PC-3 (cell line): ENCODE measurements at regions of chr6 and their contacts with region 1.

Region 1: DNA sequence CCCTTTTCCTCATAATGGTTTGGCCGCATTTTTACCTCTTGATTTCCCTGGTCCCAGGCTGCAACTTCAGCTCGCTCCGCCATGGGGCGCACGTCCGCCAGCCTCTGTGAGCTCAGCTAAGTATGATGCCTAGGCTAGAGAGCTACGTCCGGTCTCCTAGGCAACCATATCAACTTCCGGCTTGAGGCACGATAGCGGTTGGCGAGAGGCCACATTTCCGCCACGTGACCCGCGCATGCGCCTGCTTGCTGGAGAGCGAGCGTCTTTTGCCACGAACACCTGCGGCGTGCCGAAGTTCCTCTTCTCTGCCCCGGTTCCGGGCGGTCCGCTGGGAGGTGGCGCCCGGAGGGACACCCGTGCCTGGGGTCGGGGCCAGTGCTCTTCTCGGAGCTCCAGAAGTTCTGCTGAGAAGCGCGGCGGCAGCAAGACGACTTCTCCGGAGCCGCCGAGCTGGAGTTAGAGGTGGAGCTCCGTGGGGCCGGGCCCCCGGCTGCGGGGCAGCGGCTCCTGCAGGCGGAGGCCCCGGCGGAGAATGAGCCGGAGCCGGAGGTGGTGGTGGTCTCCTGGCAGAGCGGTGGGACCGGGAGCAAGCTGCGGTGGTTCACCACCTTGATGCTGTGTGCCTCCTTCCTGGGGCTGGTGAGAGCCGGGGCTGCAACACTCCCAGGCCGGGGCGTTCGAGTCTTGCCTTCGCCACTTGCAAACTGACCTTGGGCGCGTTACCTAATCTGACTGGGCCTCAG is 172.0 kb downstream of the SLC16A10 start:
- DNase-seq: peak; percentile 97
- ATAC-seq: peak; percentile 91
- H3K4me3 ChIP-seq: peak overlapping the region; percentile 81
- H3K27ac ChIP-seq: peak overlapping the region; percentile 29; the same call in 1 of the 2 replicates
- H3K4me1 ChIP-seq: peaks cover 10% of the 10 kb centered on the region
- H3K27me3 ChIP-seq: no peaks in the 10 kb centered on the region
- CTCF ChIP-seq: peak; percentile 80

Region 2: DNA sequence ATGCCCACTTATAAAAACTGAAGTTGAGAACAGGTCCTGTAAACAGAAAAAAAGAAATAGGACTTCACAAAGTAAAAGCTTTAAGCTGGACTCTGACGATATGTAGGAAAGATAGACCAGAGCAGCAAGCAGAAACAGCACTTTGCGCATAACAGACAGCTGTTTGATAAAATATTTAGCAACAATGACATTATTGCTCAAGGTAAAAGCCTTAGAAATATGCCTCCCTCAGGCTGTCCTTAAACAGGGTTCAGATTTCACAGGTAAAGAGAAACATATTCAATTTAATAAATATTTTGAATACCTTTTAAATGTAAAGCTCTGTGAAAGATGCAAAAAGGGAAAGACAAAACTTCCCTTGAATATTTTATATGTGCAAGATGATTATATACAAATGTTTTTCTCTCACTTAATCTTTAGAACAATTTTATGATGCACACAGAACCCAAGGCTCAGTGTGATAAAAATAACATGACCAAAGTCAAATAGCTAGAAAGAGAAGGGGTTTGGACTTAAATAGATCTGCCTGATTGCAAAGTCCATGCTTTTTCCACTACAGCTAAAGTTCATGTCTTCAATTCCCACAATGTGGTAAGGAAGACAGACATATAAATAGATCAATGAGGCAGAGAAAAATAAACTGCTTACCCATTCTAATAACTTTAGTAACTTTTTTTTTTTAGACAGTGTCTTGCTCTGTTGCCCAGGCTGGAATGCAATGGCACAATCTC is 588.0 kb before region 1 on chr6:
- CTCF ChIA-PET with region 1: no interaction called
- POLR2A ChIA-PET with region 1: no interaction called
- intact Hi-C with region 1: no loop called
- DNase-seq: no peak
- ATAC-seq: no peak
- H3K4me3 ChIP-seq: no peak overlapping the region
- H3K27ac ChIP-seq: no peak overlapping the region
- H3K4me1 ChIP-seq: no peaks in the 10 kb centered on the region
- H3K27me3 ChIP-seq: no peaks in the 10 kb centered on the region
- CTCF ChIP-seq: no peak

Region 3: GRCh38 chr6:111011360-111012142 is 247.7 kb before region 1 on chr6:
- CTCF ChIA-PET with region 1: no interaction called
- POLR2A ChIA-PET with region 1: no interaction called
- intact Hi-C with region 1: loop called (anchors 5 kb)
- DNase-seq: peak; percentile 50
- ATAC-seq: peak; percentile 69
- H3K4me3 ChIP-seq: no peak overlapping the region
- H3K27ac ChIP-seq: no peak overlapping the region
- H3K4me1 ChIP-seq: no peaks in the 10 kb centered on the region
- H3K27me3 ChIP-seq: no peaks in the 10 kb centered on the region
- CTCF ChIP-seq: peak; percentile 71

Region 4: DNA sequence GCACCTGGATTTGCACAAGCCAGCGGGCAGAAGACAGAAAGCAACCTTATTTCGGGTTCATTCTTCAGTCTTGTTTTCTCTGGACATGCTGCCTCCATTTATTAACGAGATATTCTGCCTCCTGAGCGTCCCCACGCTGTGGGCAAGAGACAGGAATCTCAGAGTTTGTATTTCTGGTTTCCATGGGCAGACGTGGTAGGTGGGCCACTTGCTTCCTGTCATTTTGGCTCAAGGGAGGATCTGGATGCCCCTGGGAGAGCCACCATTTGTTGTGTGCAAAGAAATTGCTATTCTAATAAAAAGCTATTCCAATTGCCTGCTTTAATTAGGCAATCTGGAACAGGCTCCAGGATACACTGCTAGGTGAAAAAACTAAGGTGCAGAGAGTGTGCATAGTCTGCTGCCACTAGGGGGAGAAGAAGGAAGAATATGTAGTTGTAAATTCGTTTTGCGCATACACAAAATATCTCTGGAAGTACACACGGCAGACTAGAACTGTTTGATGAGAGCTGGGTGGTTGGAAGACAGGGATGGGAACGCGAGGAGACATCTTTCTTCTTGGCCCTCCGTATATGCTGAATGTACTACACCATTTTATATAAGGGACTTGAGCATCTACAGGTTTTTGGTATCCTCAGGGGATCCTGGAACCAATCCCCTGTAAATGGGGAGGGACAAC is 202.0 kb before region 1 on chr6:
- CTCF ChIA-PET with region 1: no interaction called
- POLR2A ChIA-PET with region 1: interaction called, 4 read pairs
- intact Hi-C with region 1: loop called (anchors 1 kb)
- DNase-seq: peak; percentile 51
- ATAC-seq: peak; percentile 72
- H3K4me3 ChIP-seq: no peak overlapping the region
- H3K27ac ChIP-seq: no peak overlapping the region
- H3K4me1 ChIP-seq: no peaks in the 10 kb centered on the region
- H3K27me3 ChIP-seq: no peaks in the 10 kb centered on the region
- CTCF ChIP-seq: peak; percentile 75

Region 5: DNA sequence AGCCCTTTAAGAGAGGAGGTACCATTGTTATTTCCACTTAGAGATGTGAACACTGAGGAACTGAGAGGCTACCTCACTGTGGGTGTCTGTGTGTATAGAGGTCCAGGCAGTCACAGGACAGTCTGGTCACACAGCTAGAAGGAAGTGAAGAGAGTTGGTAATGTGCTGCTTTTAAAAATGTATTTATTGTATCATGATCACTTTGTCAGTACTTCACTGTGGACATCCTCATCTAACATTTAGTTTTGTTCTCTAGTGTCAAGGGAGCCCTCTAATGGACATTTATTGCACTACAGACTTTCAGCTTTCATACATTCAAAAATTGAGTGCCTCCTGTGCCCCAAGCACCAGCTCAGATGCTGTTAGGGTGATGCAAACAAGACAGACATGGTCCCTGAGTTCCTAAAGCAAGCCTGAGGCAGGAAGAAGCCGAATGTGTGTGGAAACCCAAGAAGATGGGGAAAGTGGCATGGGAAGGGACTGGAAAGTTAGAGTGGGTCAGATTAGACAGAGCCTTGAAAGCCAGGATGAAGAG is 49.0 kb before region 1 on chr6:
- CTCF ChIA-PET with region 1: no interaction called
- POLR2A ChIA-PET with region 1: no interaction called
- intact Hi-C with region 1: loop called (anchors 2 kb)
- DNase-seq: peak; percentile 76
- ATAC-seq: peak; percentile 65
- H3K4me3 ChIP-seq: no peak overlapping the region
- H3K27ac ChIP-seq: no peak overlapping the region
- H3K4me1 ChIP-seq: no peaks in the 10 kb centered on the region
- H3K27me3 ChIP-seq: no peaks in the 10 kb centered on the region
- CTCF ChIP-seq: peak; percentile 75

Region 6: GRCh38 chr6:111478749-111479148 is 219.5 kb after region 1 on chr6:
- CTCF ChIA-PET with region 1: interaction called, 27 read pairs
- POLR2A ChIA-PET with region 1: no interaction called
- intact Hi-C with region 1: loop called (anchors 1 kb)
- DNase-seq: peak; percentile 57
- ATAC-seq: peak; percentile 35
- H3K4me3 ChIP-seq: no peak overlapping the region
- H3K27ac ChIP-seq: no peak overlapping the region
- H3K4me1 ChIP-seq: peaks cover 27% of the 10 kb centered on the region
- H3K27me3 ChIP-seq: no peaks in the 10 kb centered on the region
- CTCF ChIP-seq: peak; percentile 62

Region 7: DNA sequence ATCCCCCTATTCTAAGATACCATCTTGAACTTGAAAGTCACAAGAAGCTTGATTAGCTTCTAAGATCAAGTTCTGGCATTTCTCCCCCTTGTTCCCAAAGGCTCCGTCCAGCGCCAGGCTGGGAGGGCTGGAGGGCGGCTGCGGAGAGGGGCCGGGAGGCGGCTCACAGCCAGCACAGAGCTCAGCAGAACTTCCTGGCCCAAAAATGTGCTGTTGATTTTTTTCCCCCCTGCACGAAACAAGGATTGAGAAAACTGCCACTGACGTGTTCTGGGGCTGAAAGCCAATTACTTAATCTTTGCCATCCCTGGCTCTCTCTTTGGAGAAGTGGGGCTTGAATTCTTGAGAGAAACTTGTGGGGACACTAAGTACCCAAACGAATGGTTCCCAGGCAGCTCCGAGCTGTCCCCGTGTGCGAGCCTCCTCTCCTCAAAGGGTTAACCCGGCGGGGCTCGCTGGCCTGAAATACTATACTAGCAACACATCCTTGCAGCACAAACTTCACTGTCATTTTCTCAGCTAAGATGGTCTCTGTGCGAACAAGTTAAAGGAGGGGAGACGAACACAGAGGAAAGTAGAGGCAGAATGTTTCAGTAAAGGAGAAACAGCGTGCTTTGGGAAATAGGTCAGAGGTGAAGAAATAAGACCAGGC is 346.0 kb after region 1 on chr6:
- CTCF ChIA-PET with region 1: no interaction called
- POLR2A ChIA-PET with region 1: no interaction called
- intact Hi-C with region 1: loop called (anchors 2 kb)
- DNase-seq: peak; percentile 44
- ATAC-seq: peak; percentile 56
- H3K4me3 ChIP-seq: peak overlapping the region; percentile 89
- H3K27ac ChIP-seq: peak overlapping the region; percentile 91
- H3K4me1 ChIP-seq: peaks cover 37% of the 10 kb centered on the region
- H3K27me3 ChIP-seq: no peaks in the 10 kb centered on the region
- CTCF ChIP-seq: no peak

Region 8: DNA sequence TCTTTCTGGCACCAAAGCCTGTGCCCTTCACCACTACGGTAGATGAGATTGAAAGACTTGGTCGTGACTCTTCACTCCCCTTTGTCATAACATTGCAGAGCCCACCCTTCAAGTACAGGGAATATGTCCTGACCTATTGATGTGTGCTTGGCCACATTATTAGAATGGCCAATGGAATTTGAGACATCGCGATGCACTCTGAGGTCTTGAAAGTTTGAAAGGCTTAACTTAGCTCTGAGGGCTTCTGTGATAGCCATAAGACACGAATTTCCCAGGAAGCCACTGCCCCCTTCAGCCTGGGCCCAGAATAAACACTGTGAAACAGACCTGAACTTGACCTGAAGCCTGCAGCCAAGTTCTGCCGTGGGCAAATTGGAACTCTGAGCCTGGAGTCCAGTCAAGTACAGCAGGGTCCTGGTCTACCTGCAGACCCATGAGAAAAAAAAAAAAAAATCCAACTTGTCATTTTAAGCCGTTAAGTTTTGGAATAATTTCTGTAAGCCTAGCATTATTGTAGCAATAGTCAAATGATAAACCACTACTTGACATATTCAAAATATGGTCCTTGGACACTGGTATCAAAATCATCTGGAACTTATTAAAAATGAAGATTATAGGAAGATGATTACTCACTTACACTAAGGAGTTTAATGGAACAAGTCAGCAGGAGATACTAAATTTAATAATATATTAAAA is 383.4 kb after region 1 on chr6:
- CTCF ChIA-PET with region 1: no interaction called
- POLR2A ChIA-PET with region 1: no interaction called
- intact Hi-C with region 1: loop called (anchors 1 kb)
- DNase-seq: peak; percentile 65
- ATAC-seq: peak; percentile 78
- H3K4me3 ChIP-seq: no peak overlapping the region
- H3K27ac ChIP-seq: no peak overlapping the region
- H3K4me1 ChIP-seq: no peaks in the 10 kb centered on the region
- H3K27me3 ChIP-seq: no peaks in the 10 kb centered on the region
- CTCF ChIP-seq: peak; percentile 72